ENCODE measurements at regions of chr5 and their contacts with region 1.

Region 1: GRCh38 chr5:139197710-139198669 is at the start of gene SIL1:
- DNase-seq: peak; percentile 96 to 99
- ATAC-seq: peak; percentile 99
- H3K4me3 ChIP-seq: peak within 1 kb of the TSS; percentile 51 to 90 (median 80)
- H3K27ac ChIP-seq: peak within 1 kb of the TSS; percentile 42 to 98 (median 95)
- H3K4me1 ChIP-seq: peaks cover 0 to 34% (median 9%) of the 10 kb centered on the region in 9 donors
- H3K27me3 ChIP-seq: no peaks in the 10 kb centered on the region
- CTCF ChIP-seq: peak in 2 of 9 donors; percentile 10 to 18
- total RNA-seq, gene SIL1: 26.7 to 68.1 (median 43.4) TPM

Region 2: GRCh38 chr5:138824924-138825863 is 372.8 kb before region 1 on chr5:
- intact Hi-C with region 1: loop called in 1 of 10 experiments (anchors 5 kb)
- DNase-seq: peak in 1 of 2 donors; percentile 32
- ATAC-seq: peak in 6 of 8 donors; percentile 34 to 61 (median 52)
- H3K4me3 ChIP-seq: no peak overlapping the region
- H3K27ac ChIP-seq: peak overlapping the region in 2 of 10 donors; percentile 30 to 50
- H3K4me1 ChIP-seq: peaks cover 4 to 55% (median 41%) of the 10 kb centered on the region in 9 donors
- H3K27me3 ChIP-seq: no peaks in the 10 kb centered on the region
- CTCF ChIP-seq: peak; percentile 32 to 74 (median 65)

Region 3: DNA sequence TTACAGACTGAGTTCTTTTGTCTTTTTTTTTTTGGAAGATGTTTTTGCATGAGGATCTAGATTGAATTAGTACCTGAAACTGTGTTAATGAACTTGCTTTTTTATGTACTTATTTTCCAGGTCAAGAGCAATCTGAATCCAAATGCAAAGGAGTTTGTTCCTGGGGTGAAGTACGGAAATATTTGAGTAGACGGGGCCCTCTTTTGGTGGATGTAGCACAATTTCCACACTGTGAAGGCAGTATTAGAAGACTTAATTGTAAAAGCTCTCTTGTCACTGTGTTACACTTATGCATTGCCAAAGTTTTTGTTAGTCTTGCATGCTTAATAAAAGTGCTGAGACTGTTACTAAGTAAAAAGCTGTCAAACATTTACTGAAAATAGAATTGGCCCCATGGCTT is 170.6 kb after region 1 on chr5:
- intact Hi-C with region 1: no loop called
- DNase-seq: no peak
- ATAC-seq: peak in 2 of 8 donors; percentile 17 to 21
- H3K4me3 ChIP-seq: no peak overlapping the region
- H3K27ac ChIP-seq: peak overlapping the region in 1 of 10 donors; percentile 53
- H3K4me1 ChIP-seq: peaks cover 0 to 30% (median 14%) of the 10 kb centered on the region in 9 donors
- H3K27me3 ChIP-seq: no peaks in the 10 kb centered on the region
- CTCF ChIP-seq: peak in 2 of 9 donors; percentile 10 to 24

Measured in heart right ventricle (tissue), 16 donors.